WTC11 (cell line): ENCODE measurements at regions of chr17 and their contacts with region 1.

Region 1: DNA sequence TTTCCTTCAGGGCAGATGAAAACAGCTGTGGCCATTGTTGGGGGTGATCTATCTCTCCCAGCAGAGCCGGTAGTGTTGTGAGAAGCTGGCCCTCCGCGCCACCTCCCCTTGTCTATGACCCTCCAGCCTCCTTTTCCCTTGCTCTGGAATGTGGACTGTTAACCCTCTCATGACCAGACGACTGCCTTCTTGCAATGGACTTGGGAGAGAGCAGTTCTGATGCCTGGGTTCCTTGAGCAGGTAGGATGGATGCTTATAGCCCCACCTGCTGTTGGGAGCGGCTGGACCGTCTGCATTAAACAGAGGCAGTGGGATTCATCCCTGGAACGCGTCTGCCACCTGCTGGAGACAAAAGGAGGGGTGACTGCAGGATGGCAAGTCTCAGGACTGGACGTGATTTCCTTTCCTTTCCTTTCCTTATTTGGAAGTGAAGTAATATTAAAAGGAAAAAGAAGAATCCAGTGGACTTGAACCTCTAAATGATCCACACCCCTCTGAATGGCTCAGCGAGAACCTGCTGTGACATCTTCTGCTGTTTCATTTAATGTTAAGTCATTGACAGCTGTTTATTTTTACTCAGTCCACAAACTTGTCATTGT is 1.8 kb upstream of the SOST start:
- DNase-seq: peak; percentile 99
- ATAC-seq: peak; percentile 81
- H3K4me3 Mint-ChIP-seq: peak overlapping the region; percentile 28
- H3K27ac Mint-ChIP-seq: no peak overlapping the region
- H3K4me1 Mint-ChIP-seq: peaks cover 36% of the 10 kb centered on the region
- H3K27me3 Mint-ChIP-seq: peaks cover 18% of the 10 kb centered on the region
- CTCF ChIP-seq: peak; percentile 94

Region 2: DNA sequence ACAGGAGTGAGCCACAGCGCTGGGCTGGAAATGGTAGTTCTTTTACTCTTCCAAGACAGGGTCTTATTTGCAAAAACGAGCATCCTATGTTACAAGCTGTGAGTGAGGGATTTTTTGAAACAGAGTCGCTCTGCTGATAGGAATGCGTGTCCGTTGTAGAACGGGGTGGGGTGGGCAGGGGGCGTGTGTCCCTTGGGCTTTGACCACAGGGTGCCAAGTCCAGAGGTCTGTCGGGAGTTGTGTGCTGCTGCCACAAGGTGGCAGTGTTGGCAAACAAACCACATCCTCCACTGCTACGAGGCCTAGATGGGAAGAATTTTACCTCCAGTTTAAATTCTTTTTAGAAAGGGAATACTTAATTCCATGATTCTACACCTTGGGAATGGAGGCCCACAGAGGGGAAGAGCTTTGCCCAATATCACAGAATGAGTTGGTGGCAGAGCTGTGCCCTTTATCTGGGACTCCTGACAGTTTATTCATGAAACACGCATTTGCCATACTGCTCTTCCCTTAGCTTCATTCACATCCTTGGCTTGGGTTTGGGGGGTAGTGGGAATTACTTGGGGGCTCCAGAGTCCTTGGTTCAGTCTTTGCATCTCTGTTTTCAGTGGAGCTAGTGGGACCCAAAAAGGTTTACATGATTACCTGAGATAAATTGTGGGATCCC is 183.7 kb before region 1 on chr17:
- CTCF ChIA-PET with region 1: interaction called, 97 read pairs
- POLR2A ChIA-PET with region 1: no interaction called
- DNase-seq: peak; percentile 85
- ATAC-seq: peak; percentile 83
- H3K4me3 Mint-ChIP-seq: peak overlapping the region; percentile 51
- H3K27ac Mint-ChIP-seq: no peak overlapping the region
- H3K4me1 Mint-ChIP-seq: peaks cover 36% of the 10 kb centered on the region
- H3K27me3 Mint-ChIP-seq: no peaks in the 10 kb centered on the region
- CTCF ChIP-seq: peak; percentile 89

Region 3: GRCh38 chr17:43616852-43617251 is 143.5 kb before region 1 on chr17:
- CTCF ChIA-PET with region 1: no interaction called
- POLR2A ChIA-PET with region 1: no interaction called
- DNase-seq: no peak
- ATAC-seq: no peak
- H3K4me3 Mint-ChIP-seq: no peak overlapping the region
- H3K27ac Mint-ChIP-seq: no peak overlapping the region
- H3K4me1 Mint-ChIP-seq: peaks cover 4% of the 10 kb centered on the region; the same call in 1 of the 2 replicates
- H3K27me3 Mint-ChIP-seq: no peaks in the 10 kb centered on the region; the same call in 1 of the 2 replicates
- CTCF ChIP-seq: no peak

Region 4: GRCh38 chr17:43680461-43680860 is 79.9 kb before region 1 on chr17:
- CTCF ChIA-PET with region 1: interaction called, 13 read pairs
- POLR2A ChIA-PET with region 1: interaction called, 3 read pairs
- DNase-seq: no peak
- ATAC-seq: no peak
- H3K4me3 Mint-ChIP-seq: no peak overlapping the region
- H3K27ac Mint-ChIP-seq: no peak overlapping the region
- H3K4me1 Mint-ChIP-seq: peaks cover 45% of the 10 kb centered on the region
- H3K27me3 Mint-ChIP-seq: no peaks in the 10 kb centered on the region
- CTCF ChIP-seq: no peak

Region 5: DNA sequence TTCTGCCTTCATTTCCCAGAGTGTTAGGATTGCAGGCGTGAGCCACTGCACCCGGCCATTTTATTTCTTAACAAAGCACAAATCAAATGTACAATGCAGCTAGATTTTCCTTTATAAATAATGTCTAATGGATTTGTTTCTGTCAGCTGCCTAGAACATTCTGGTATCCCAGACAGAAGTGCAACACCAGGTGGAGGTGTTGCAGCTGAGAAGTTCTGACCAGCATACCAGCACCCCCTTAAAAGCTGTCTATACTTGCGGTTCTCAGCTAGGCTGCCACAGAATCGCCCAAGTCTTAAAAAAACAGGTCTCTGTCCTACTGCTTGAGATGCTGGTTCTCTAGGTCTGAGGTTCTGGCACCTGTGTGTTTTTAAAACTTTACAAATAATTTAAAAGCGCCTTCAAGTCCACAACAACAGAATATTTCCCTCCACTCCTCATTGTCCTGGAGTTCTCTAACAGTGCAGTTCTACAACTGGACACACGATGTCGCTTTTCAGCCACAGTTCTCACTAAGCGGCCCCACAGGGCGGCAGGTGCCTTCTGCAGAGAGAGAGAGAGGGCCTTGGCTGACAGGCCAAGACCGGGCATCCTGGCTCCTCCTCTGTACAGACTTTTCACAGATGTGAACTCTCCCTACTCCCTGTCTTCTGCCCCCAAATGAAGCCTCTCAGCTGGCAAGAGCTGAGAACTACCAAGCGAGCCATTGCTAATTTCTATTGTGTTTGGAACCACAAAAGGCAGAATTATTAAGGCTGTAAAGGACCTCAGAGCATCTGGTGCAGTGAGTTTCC is 66.1 kb before region 1 on chr17:
- CTCF ChIA-PET with region 1: interaction called, 476 read pairs
- POLR2A ChIA-PET with region 1: interaction called, 7 read pairs
- DNase-seq: peak; percentile 86
- ATAC-seq: peak; percentile 91
- H3K4me3 Mint-ChIP-seq: no peak overlapping the region
- H3K27ac Mint-ChIP-seq: no peak overlapping the region
- H3K4me1 Mint-ChIP-seq: peaks cover 17% of the 10 kb centered on the region
- H3K27me3 Mint-ChIP-seq: 0 out of 2 replicates have a peak, but pooled peaks cover 2% of the 10 kb centered on the region
- CTCF ChIP-seq: peak; percentile 81

Region 6: GRCh38 chr17:43713494-43714162 is 46.7 kb before region 1 on chr17:
- CTCF ChIA-PET with region 1: interaction called, 32 read pairs
- POLR2A ChIA-PET with region 1: interaction called, 4 read pairs
- DNase-seq: peak; percentile 52
- ATAC-seq: peak; percentile 78
- H3K4me3 Mint-ChIP-seq: peak overlapping the region; percentile 66
- H3K27ac Mint-ChIP-seq: no peak overlapping the region
- H3K4me1 Mint-ChIP-seq: peaks cover 20% of the 10 kb centered on the region
- H3K27me3 Mint-ChIP-seq: peaks cover 65% of the 10 kb centered on the region
- CTCF ChIP-seq: no peak

Region 7: DNA sequence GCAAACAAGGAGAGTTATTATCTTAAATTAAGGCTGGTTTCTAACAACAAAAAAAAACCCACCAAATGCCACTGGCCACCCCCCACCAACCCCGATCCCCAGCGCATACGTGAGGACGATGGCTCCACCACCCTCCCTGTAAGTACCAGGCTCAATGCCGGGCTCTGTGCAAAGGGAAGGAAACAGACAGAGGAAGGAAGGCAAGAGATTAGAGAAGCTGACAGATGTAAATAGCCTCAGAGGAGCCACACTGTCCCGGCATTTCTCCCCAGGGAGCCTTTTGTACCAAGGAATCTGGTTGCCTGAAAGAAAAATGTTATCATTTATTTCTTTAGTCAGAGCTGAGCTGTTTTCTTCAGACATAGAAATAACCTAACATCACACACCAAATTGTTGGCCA is 14.8 kb before region 1 on chr17:
- CTCF ChIA-PET with region 1: interaction called, 17 read pairs
- POLR2A ChIA-PET with region 1: interaction called, 3 read pairs
- DNase-seq: peak; percentile 21
- ATAC-seq: peak; percentile 72
- H3K4me3 Mint-ChIP-seq: no peak overlapping the region
- H3K27ac Mint-ChIP-seq: no peak overlapping the region
- H3K4me1 Mint-ChIP-seq: peaks cover 36% of the 10 kb centered on the region
- H3K27me3 Mint-ChIP-seq: no peaks in the 10 kb centered on the region; the same call in 1 of the 2 replicates
- CTCF ChIP-seq: no peak